ENCODE measurements at regions of chr15 and their contacts with region 1.

Region 1: GRCh38 chr15:78761891-78762385 is 49.3 kb downstream of the ADAMTS7 start:
- DNase-seq: peak in 1 of 2 donors; percentile 1
- ATAC-seq: no peak
- H3K4me3 ChIP-seq: no peak overlapping the region
- H3K27ac ChIP-seq: peak overlapping the region in 2 of 4 donors; percentile 0 to 82
- H3K4me1 ChIP-seq: peaks cover 20 to 24% of the 10 kb centered on the region in 2 donors
- H3K27me3 ChIP-seq: no peaks in the 10 kb centered on the region
- CTCF ChIP-seq: no peak
- POLR2A ChIP-seq: no peak

Region 2: GRCh38 chr15:78811124-78811824 is 49.3 kb after region 1 on chr15 and contains the start of gene ADAMTS7:
- in situ Hi-C with region 1: no loop called
- intact Hi-C with region 1: loop called (anchors 5 kb)
- DNase-seq: peak; percentile 25 to 49
- ATAC-seq: peak; percentile 82 to 83
- H3K4me3 ChIP-seq: peak within 1 kb of the TSS; percentile 57 to 71 (median 66)
- H3K27ac ChIP-seq: peak within 1 kb of the TSS; percentile 63 to 72 (median 65)
- H3K4me1 ChIP-seq: peaks cover 0 to 8% of the 10 kb centered on the region in 2 donors
- H3K27me3 ChIP-seq: peaks cover 0 to 12% (median 4%) of the 10 kb centered on the region in 3 donors
- CTCF ChIP-seq: peak; percentile 47 to 78 (median 71)
- POLR2A ChIP-seq: peak in 1 of 2 donors; percentile 7
- total RNA-seq, gene ADAMTS7: 0.42 to 1.1 (median 0.76) TPM

Region 3: GRCh38 chr15:78872972-78873792 is 111.2 kb after region 1 on chr15:
- in situ Hi-C with region 1: no loop called
- intact Hi-C with region 1: loop called (anchors 2 kb)
- DNase-seq: peak; percentile 48 to 62
- ATAC-seq: peak; percentile 69 to 74
- H3K4me3 ChIP-seq: peak overlapping the region; percentile 84 to 100 (median 96)
- H3K27ac ChIP-seq: peak overlapping the region; percentile 94 to 100 (median 99)
- H3K4me1 ChIP-seq: peaks cover 38 to 39% of the 10 kb centered on the region in 2 donors
- H3K27me3 ChIP-seq: no peaks in the 10 kb centered on the region
- CTCF ChIP-seq: peak in 3 of 5 experiments; percentile 8 to 36 (median 27)
- POLR2A ChIP-seq: peak; percentile 91